Activated T-helper 1 cell treated with anti-CD3 and anti-CD28 coated beads, Interleukin-12 subunit alpha, Interleukin-12 subunit beta, Interleukin-2, Interleukin-4 antibody, amounts not matched to agents 30 ng/mL and 10 ng/mL and 1 ng/mL, durations not matched to agents 14 hours and 24 hours and 36 hours (primary cell): ENCODE measurements at regions of chr5 and their contacts with region 1.

Region 1: DNA sequence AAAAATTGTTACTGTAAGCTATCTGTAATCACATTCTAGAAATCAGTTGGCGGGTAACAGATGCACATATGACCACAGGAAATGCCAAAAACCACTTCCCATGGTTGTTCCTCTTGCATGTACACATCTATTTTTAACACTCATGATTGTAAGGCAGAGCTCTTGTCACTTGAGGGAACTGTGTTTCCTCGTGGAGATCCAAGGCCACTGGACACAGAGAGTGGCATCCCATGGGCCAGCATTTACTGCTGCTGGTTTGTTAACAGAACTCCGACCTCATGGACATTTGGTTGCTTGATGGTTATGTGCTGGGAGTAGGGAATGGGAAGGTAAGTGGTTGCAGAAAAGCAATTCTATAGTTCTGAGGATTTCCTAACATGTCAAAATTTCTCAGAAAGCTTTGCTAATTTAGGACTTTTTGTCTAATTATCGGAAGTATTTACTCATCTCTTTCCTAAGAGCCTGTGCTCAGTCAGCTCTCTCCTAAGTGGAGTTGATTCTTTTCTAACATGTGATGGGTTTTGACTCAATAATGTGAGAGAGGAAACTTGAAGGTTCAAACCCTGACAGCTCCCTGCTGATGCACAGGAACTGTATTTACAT is 202.0 kb upstream of the NR3C1 start:
- DNase-seq: peak; percentile 25
- H3K4me3 Mint-ChIP-seq: peak overlapping the region; percentile 56
- H3K27ac Mint-ChIP-seq: peak overlapping the region; percentile 91
- H3K4me1 Mint-ChIP-seq: peaks cover 38% of the 10 kb centered on the region
- H3K27me3 Mint-ChIP-seq: no peaks in the 10 kb centered on the region

Region 2: GRCh38 chr5:143515829-143516228 is 89.7 kb before region 1 on chr5:
- intact Hi-C with region 1: no loop called
- DNase-seq: no peak
- H3K4me3 Mint-ChIP-seq: no peak overlapping the region
- H3K27ac Mint-ChIP-seq: no peak overlapping the region
- H3K4me1 Mint-ChIP-seq: no peaks in the 10 kb centered on the region
- H3K27me3 Mint-ChIP-seq: peaks cover 2% of the 10 kb centered on the region

Region 3: DNA sequence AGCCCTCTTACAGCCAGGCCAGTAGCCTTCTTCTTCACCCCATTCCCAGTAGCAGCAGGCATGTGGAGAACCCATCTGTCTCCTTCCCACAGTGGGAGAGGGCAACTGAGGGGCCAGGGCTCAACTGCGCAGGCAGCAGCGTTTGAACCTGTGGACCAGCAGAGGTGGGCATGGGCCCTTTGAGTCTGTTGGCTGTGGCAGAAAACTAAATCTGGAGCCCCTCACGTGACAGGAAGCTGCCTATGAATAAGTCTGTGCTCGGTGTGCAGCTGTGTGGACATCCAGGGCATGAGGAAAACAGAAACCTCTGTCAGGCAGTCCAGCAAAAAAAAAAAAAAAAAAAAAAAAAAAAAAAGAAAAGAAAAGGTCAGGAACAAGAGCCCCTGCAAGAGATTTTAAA is 12.9 kb before region 1 on chr5:
- intact Hi-C with region 1: loop called (anchors 1 kb)
- DNase-seq: no peak
- H3K4me3 Mint-ChIP-seq: no peak overlapping the region
- H3K27ac Mint-ChIP-seq: no peak overlapping the region
- H3K4me1 Mint-ChIP-seq: peaks cover 37% of the 10 kb centered on the region
- H3K27me3 Mint-ChIP-seq: no peaks in the 10 kb centered on the region

Region 4: GRCh38 chr5:143648696-143649095 is 43.2 kb after region 1 on chr5:
- intact Hi-C with region 1: loop called (anchors 1 kb)
- DNase-seq: no peak
- H3K4me3 Mint-ChIP-seq: no peak overlapping the region
- H3K27ac Mint-ChIP-seq: no peak overlapping the region
- H3K4me1 Mint-ChIP-seq: peaks cover 6% of the 10 kb centered on the region
- H3K27me3 Mint-ChIP-seq: no peaks in the 10 kb centered on the region

Region 5: DNA sequence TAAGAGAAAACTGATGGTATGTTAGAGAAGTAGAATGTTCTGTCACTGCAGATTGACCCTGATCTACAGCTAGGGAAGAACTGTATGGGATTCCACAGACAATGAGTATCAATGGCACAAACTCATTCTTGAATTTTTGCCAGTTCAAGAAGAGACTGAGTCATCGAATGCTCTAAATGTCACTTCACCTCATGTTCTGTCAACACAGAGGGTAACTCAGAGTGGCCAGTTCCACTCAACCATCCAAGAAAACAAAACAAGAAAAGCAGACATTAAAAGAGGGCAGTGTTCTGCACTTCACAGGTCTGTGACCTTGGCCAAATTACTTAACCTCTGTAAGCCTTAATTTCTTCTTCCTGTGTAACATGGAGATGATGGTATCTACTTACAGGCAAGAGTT is 74.3 kb after region 1 on chr5:
- intact Hi-C with region 1: loop called (anchors 1 kb)
- DNase-seq: no peak
- H3K4me3 Mint-ChIP-seq: no peak overlapping the region
- H3K27ac Mint-ChIP-seq: no peak overlapping the region
- H3K4me1 Mint-ChIP-seq: peaks cover 18% of the 10 kb centered on the region
- H3K27me3 Mint-ChIP-seq: no peaks in the 10 kb centered on the region